ENCODE measurements at regions of chr14 and their contacts with region 1.

Region 1: DNA sequence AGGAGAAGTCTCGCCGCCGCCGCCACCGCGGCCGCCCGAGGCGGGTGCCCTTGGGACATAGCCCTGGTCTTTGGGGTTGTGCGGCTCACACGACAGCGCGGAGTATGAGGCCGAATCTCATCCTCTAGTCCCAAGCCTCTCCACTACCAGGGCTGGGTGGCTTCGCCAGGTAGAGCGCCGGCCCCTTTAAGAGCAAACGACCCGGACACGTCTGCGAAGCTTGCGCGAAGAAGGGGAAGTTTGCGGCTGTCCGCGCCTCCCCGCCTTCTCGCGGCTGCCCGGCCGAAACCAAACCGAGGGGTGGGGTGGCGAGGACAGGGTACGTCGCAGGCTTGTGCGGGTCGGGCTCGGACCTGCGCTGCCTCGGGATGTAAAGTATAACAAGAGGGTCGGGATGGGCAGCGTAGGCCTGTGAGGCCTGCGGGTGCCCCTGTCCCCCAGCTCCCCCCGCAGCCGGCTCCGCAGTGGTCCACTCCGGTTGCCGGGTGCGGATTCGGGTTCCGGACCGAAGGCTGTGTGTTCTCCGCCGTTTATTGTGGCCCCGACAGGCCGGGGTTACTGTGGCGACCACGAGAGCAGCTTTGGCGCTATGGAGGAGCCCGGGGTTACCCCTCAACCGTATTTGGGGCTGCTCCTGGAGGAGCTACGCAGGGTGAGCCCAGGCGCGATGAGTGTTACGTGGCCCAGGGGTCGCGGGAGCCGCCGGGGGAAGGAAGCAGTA is 33.3 kb downstream of the MIA2 start:
- DNase-seq: peak; percentile 89
- H3K4me3 Mint-ChIP-seq: peak overlapping the region; percentile 96
- H3K27ac Mint-ChIP-seq: peak overlapping the region; percentile 98
- H3K4me1 Mint-ChIP-seq: peaks cover 29% of the 10 kb centered on the region
- H3K27me3 Mint-ChIP-seq: no peaks in the 10 kb centered on the region
- CTCF ChIP-seq: no peak

Region 2: DNA sequence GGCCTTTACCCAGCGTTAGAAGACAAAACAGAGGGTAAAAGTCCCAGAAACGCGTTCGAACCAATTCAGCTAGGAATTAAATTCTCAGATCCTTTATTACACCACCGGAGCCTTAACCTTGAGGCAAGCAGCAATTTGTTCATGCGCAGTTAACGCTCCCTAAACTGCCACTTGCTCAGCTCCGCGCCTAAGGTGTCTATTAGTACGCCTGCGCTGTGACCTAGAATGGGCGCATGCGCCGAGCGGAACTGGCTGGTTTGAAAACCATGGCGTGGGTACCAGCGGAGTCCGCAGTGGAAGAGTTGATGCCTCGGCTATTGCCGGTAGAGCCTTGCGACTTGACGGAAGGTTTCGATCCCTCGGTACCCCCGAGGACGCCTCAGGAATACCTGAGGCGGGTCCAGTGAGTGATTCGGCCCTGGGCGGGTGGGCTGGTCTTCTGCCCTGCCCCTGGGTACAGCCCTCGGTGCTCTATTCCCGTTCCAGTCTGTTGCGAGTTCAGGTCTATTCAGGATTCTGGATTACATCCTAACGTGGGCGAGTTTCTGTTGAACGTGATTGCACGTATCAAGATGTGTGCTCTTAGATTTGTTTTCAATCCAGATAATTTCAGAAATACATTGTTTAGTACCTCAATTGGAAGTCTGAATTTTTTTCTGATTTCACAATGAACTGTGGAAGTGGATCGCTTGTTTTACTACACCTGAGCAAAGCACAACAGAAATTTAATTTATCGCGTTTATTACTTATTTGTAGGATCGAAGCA is 152.8 kb before region 1 on chr14 and contains the start of gene GEMIN2:
- CTCF ChIA-PET with region 1: no interaction called
- POLR2A ChIA-PET with region 1: interaction called, 10 read pairs
- intact Hi-C with region 1: loop called (anchors 1 kb)
- DNase-seq: peak; percentile 96
- H3K4me3 Mint-ChIP-seq: peak within 1 kb of the TSS; percentile 93
- H3K27ac Mint-ChIP-seq: peak within 1 kb of the TSS; percentile 90
- H3K4me1 Mint-ChIP-seq: peaks cover 6% of the 10 kb centered on the region
- H3K27me3 Mint-ChIP-seq: no peaks in the 10 kb centered on the region
- CTCF ChIP-seq: no peak
- total RNA-seq, gene GEMIN2: 21.2 and 23.4 TPM in 2 replicates

Region 3: GRCh38 chr14:39174560-39175444 is 92.2 kb before region 1 on chr14 and contains the start of gene PNN:
- CTCF ChIA-PET with region 1: interaction called, 3 read pairs
- POLR2A ChIA-PET with region 1: interaction called, 144 read pairs
- intact Hi-C with region 1: loop called (anchors 1 kb)
- DNase-seq: peak; percentile 99
- H3K4me3 Mint-ChIP-seq: peak within 1 kb of the TSS; percentile 93
- H3K27ac Mint-ChIP-seq: peak within 1 kb of the TSS; percentile 98
- H3K4me1 Mint-ChIP-seq: peaks cover 8% of the 10 kb centered on the region
- H3K27me3 Mint-ChIP-seq: no peaks in the 10 kb centered on the region
- CTCF ChIP-seq: no peak
- total RNA-seq, gene PNN: 82.6 and 96.7 TPM in 2 replicates

Region 4: DNA sequence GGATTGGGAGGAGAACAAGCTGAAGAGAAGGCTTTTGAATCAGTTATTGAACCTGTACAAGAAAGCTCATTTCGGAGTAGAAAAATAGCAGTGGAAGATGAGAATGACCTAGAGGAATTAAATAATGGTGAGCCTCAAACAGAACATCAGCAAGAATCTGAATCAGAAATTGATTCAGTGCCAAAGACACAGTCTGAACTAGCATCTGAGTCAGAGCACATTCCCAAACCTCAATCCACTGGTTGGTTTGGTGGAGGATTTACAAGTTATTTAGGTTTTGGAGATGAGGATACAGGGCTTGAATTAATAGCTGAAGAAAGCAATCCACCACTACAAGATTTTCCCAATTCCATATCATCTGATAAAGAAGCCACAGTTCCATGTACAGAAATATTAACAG is 19.8 kb before region 1 on chr14:
- CTCF ChIA-PET with region 1: interaction called, 3 read pairs
- POLR2A ChIA-PET with region 1: interaction called, 19 read pairs
- intact Hi-C with region 1: no loop called
- DNase-seq: peak; percentile 73
- H3K4me3 Mint-ChIP-seq: no peak overlapping the region
- H3K27ac Mint-ChIP-seq: peak overlapping the region; percentile 13
- H3K4me1 Mint-ChIP-seq: peaks cover 12% of the 10 kb centered on the region
- H3K27me3 Mint-ChIP-seq: no peaks in the 10 kb centered on the region
- CTCF ChIP-seq: no peak

Measured in MCF 10A (cell line).